ENCODE measurements at regions of chr10 and their contacts with region 1.

Region 1: GRCh38 chr10:113678690-113679462 is 836 bp upstream of the CASP7 start:
- DNase-seq: peak; percentile 68
- ATAC-seq: peak; percentile 9
- H3K4me3 Mint-ChIP-seq: peak overlapping the region; percentile 92
- H3K27ac Mint-ChIP-seq: peak overlapping the region; percentile 94
- H3K4me1 Mint-ChIP-seq: peaks cover 48% of the 10 kb centered on the region
- H3K27me3 Mint-ChIP-seq: no peaks in the 10 kb centered on the region
- CTCF ChIP-seq: no peak

Region 2: DNA sequence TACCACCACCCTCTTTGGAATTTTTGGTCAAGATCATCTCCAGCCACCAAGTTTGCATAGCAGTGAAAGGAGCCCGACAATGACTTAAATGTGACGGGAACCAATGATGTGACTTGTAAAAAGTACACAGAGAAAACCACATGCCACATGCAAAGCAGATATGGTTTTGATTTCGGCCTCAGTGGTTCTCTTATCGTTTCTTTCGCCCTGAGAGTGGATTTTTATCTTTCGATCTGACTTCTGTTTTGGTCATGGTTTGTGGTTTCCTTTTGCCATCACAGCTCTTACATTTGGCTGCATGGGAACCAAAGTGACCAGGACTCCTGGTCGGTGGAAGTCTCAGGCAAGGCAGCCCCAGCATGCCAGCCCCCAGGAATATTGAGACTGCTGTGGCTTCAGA is 697.3 kb before region 1 on chr10:
- CTCF ChIA-PET with region 1: no interaction called
- POLR2A ChIA-PET with region 1: no interaction called
- intact Hi-C with region 1: loop called (anchors 10 kb)
- DNase-seq: no peak
- ATAC-seq: peak; percentile 81
- H3K4me3 Mint-ChIP-seq: no peak overlapping the region
- H3K27ac Mint-ChIP-seq: peak overlapping the region; percentile 59
- H3K4me1 Mint-ChIP-seq: peaks cover 26% of the 10 kb centered on the region
- H3K27me3 Mint-ChIP-seq: peaks cover 62% of the 10 kb centered on the region
- CTCF ChIP-seq: no peak

Region 3: DNA sequence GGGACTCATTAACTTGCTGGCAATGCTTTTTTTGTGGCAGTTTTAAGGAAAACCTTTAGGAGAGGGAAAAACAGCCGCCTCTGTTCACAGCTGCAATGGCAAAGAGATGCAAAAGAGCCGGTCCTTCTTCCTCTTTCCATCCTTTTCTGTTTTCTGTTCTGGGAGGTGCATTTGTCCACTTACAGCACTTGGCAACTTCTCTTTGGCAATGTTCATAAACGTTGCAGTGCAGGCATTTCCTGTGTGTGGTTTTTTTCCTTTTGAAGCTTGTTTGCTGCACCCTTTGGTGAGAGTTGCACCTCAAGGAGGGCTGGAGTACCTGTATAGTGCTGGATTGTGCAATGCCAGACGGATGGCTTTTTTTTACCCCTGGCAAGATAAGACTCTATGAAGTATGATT is 179.9 kb before region 1 on chr10:
- CTCF ChIA-PET with region 1: no interaction called
- POLR2A ChIA-PET with region 1: no interaction called
- intact Hi-C with region 1: no loop called
- DNase-seq: no peak
- ATAC-seq: no peak
- H3K4me3 Mint-ChIP-seq: no peak overlapping the region
- H3K27ac Mint-ChIP-seq: no peak overlapping the region
- H3K4me1 Mint-ChIP-seq: no peaks in the 10 kb centered on the region
- H3K27me3 Mint-ChIP-seq: peaks cover 3% of the 10 kb centered on the region
- CTCF ChIP-seq: no peak

Region 4: GRCh38 chr10:113802997-113803396 is 124.1 kb after region 1 on chr10:
- CTCF ChIA-PET with region 1: interaction called, 4 read pairs
- POLR2A ChIA-PET with region 1: no interaction called
- intact Hi-C with region 1: loop called (anchors 2 kb)
- DNase-seq: no peak
- ATAC-seq: no peak
- H3K4me3 Mint-ChIP-seq: no peak overlapping the region
- H3K27ac Mint-ChIP-seq: no peak overlapping the region
- H3K4me1 Mint-ChIP-seq: peaks cover 7% of the 10 kb centered on the region
- H3K27me3 Mint-ChIP-seq: peaks cover 3% of the 10 kb centered on the region
- CTCF ChIP-seq: no peak

Region 5: DNA sequence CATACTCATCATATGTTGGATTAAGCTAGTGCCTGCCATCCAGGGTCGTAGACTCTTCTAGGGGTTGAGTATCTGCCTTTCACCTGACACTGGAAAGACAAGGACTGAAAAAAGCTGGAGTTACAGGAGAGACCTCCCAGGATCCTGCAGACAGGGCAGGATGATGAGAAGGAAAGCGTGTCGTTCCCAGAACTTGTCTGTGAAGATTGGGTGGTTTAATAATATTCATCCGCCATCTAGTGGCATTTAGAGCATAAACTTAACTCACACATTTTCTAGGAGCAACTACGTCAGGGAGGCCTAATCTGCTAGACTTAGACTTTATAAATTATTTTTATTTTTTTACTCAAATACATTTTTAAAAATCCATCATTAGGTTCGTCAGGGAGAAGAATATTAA is 424.4 kb after region 1 on chr10:
- CTCF ChIA-PET with region 1: interaction called, 5 read pairs
- POLR2A ChIA-PET with region 1: interaction called, 3 read pairs
- intact Hi-C with region 1: loop called (anchors 1 kb)
- DNase-seq: no peak
- ATAC-seq: no peak
- H3K4me3 Mint-ChIP-seq: no peak overlapping the region
- H3K27ac Mint-ChIP-seq: no peak overlapping the region
- H3K4me1 Mint-ChIP-seq: peaks cover 41% of the 10 kb centered on the region
- H3K27me3 Mint-ChIP-seq: peaks cover 15% of the 10 kb centered on the region
- CTCF ChIP-seq: no peak

Region 6: GRCh38 chr10:114526504-114527238 is 847.8 kb after region 1 on chr10:
- CTCF ChIA-PET with region 1: no interaction called
- POLR2A ChIA-PET with region 1: interaction called, 12 read pairs
- intact Hi-C with region 1: loop called (anchors 1 kb)
- DNase-seq: peak; percentile 67
- ATAC-seq: peak; percentile 96
- H3K4me3 Mint-ChIP-seq: peak overlapping the region; percentile 95
- H3K27ac Mint-ChIP-seq: peak overlapping the region; percentile 99
- H3K4me1 Mint-ChIP-seq: peaks cover 63% of the 10 kb centered on the region
- H3K27me3 Mint-ChIP-seq: no peaks in the 10 kb centered on the region
- CTCF ChIP-seq: no peak